Activated CD4-positive, alpha-beta memory T cell treated with anti-CD3 and anti-CD28 coated beads, Interleukin-2, amount 10 ng/mL, durations not matched to agents 7 days and 5 days (primary cell): ENCODE measurements at regions of chr11 and their contacts with region 1.

Region 1: GRCh38 chr11:95790123-95790932 is at the start of gene CEP57:
- DNase-seq: peak; percentile 95
- H3K4me3 Mint-ChIP-seq: peak within 1 kb of the TSS; percentile 97
- H3K27ac Mint-ChIP-seq: peak within 1 kb of the TSS; percentile 100
- H3K4me1 Mint-ChIP-seq: peaks cover 61% of the 10 kb centered on the region
- H3K27me3 Mint-ChIP-seq: no peaks in the 10 kb centered on the region
- total RNA-seq, gene CEP57: 102 to 105 TPM

Region 2: GRCh38 chr11:94128746-94129511 is 1661.4 kb before region 1 on chr11 and contains the start of gene PANX1:
- CTCF ChIA-PET with region 1: no interaction called
- POLR2A ChIA-PET with region 1: interaction called, 11 read pairs
- DNase-seq: peak; percentile 77
- H3K4me3 Mint-ChIP-seq: no peak within 1 kb of the TSS
- H3K27ac Mint-ChIP-seq: no peak within 1 kb of the TSS
- H3K4me1 Mint-ChIP-seq: peaks cover 22% of the 10 kb centered on the region
- H3K27me3 Mint-ChIP-seq: no peaks in the 10 kb centered on the region
- total RNA-seq, gene PANX1: 13.7 to 13.9 TPM

Region 3: GRCh38 chr11:95089620-95090542 is 700.4 kb before region 1 on chr11 and contains the start of gene ENDOD1:
- CTCF ChIA-PET with region 1: no interaction called
- POLR2A ChIA-PET with region 1: interaction called, 49 read pairs
- DNase-seq: peak; percentile 88
- H3K4me3 Mint-ChIP-seq: peak within 1 kb of the TSS; percentile 84
- H3K27ac Mint-ChIP-seq: peak within 1 kb of the TSS; percentile 93
- H3K4me1 Mint-ChIP-seq: peaks cover 67% of the 10 kb centered on the region
- H3K27me3 Mint-ChIP-seq: no peaks in the 10 kb centered on the region
- total RNA-seq, gene ENDOD1: 20.6 to 22.2 TPM

Region 4: GRCh38 chr11:95599959-95600586 is 190.3 kb before region 1 on chr11:
- CTCF ChIA-PET with region 1: no interaction called
- POLR2A ChIA-PET with region 1: no interaction called
- DNase-seq: no peak
- H3K4me3 Mint-ChIP-seq: no peak overlapping the region
- H3K27ac Mint-ChIP-seq: no peak overlapping the region
- H3K4me1 Mint-ChIP-seq: no peaks in the 10 kb centered on the region
- H3K27me3 Mint-ChIP-seq: no peaks in the 10 kb centered on the region

Region 5: GRCh38 chr11:95699631-95700470 is 90.5 kb before region 1 on chr11:
- CTCF ChIA-PET with region 1: no interaction called
- POLR2A ChIA-PET with region 1: interaction called, 11 read pairs
- DNase-seq: no peak
- H3K4me3 Mint-ChIP-seq: peak overlapping the region; percentile 53
- H3K27ac Mint-ChIP-seq: peak overlapping the region; percentile 76
- H3K4me1 Mint-ChIP-seq: peaks cover 43% of the 10 kb centered on the region
- H3K27me3 Mint-ChIP-seq: no peaks in the 10 kb centered on the region

Region 6: DNA sequence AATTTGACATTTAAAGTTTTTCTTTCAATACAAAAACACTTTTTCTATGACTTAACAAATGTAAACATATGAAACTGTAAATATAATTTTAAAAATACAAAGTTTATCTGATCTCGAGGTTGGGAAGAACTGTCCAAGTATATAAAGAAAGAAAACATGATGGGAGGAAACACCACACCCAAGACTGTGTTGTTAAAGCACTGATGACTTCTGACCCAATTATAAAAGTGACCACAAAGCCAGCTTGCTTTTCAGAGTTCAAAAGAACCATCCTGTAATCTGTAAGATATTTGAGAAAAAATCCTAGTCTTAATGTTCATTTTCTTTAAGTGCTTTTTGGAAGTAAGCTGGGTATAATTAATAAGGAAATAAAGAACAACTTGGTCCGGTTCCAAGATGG is 15.5 kb after region 1 on chr11:
- CTCF ChIA-PET with region 1: interaction called, 5 read pairs
- POLR2A ChIA-PET with region 1: interaction called, 43 read pairs
- DNase-seq: no peak
- H3K4me3 Mint-ChIP-seq: no peak overlapping the region
- H3K27ac Mint-ChIP-seq: no peak overlapping the region
- H3K4me1 Mint-ChIP-seq: peaks cover 2% of the 10 kb centered on the region
- H3K27me3 Mint-ChIP-seq: no peaks in the 10 kb centered on the region

Region 7: DNA sequence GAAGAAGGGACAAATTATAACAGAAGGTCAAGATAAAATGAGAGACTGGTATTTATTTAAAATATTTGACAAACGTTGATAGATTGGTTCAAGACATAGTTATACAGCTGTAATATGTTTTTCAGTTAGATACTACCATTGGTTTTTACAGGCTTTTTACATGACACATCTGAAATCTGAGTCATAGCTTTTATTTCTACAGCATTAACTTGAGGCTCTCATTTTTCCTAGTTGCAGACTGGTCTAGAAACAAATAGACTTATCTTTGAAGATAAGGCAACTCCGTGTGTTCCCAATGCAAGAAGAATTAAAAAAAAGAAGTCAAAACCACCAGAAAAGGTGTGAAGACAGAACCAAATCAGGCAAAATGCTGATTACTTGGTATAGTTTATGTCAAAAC is 31.3 kb after region 1 on chr11:
- CTCF ChIA-PET with region 1: no interaction called
- POLR2A ChIA-PET with region 1: no interaction called
- DNase-seq: no peak
- H3K4me3 Mint-ChIP-seq: no peak overlapping the region
- H3K27ac Mint-ChIP-seq: no peak overlapping the region
- H3K4me1 Mint-ChIP-seq: no peaks in the 10 kb centered on the region
- H3K27me3 Mint-ChIP-seq: no peaks in the 10 kb centered on the region

Region 8: GRCh38 chr11:96012086-96012824 is 221.9 kb after region 1 on chr11:
- CTCF ChIA-PET with region 1: no interaction called
- POLR2A ChIA-PET with region 1: interaction called, 13 read pairs
- DNase-seq: peak; percentile 26
- H3K4me3 Mint-ChIP-seq: no peak overlapping the region
- H3K27ac Mint-ChIP-seq: no peak overlapping the region
- H3K4me1 Mint-ChIP-seq: peaks cover 45% of the 10 kb centered on the region
- H3K27me3 Mint-ChIP-seq: no peaks in the 10 kb centered on the region

Region 9: GRCh38 chr11:96254087-96254486 is 463.8 kb after region 1 on chr11:
- CTCF ChIA-PET with region 1: no interaction called
- POLR2A ChIA-PET with region 1: interaction called, 15 read pairs
- DNase-seq: peak; percentile 39
- H3K4me3 Mint-ChIP-seq: peak overlapping the region; percentile 63
- H3K27ac Mint-ChIP-seq: peak overlapping the region; percentile 77
- H3K4me1 Mint-ChIP-seq: peaks cover 71% of the 10 kb centered on the region
- H3K27me3 Mint-ChIP-seq: no peaks in the 10 kb centered on the region